Tibial artery (tissue), 4 donors: ENCODE measurements at regions of chr11 and their contacts with region 1.

Region 1: DNA sequence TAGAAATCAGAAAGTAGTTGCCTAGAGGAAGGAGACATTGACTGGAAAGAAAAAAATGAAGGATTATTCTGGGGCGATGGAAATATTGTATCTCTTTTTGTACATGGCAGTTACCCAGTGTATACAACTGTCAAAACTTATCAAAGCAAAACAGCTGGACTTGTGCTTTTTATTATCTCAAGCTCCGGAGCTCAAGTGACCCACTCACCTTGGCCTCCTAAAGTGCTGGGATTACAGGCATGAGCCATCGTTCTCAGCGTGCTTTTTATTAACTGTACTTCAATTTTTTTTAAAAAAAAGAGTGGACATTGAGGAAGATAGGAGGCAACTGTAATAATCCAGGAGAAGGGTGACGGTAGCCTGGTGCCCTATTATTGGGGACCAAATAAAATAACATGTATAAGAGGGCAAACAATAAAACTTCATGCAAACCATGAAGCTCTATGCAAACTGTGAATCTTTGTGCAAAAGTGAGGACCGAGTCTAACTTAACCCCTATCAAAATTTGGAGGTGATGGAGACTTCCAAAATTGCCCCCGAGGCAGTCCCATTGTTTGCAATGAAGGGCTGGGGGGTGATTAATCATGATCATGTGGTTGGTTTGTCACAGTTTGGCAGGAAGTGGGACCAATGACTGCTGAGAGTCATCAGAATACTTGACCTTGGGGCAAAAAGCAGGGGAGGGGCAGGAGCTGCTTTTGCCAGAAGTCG is 23.5 kb downstream of the FZD4 start:
- DNase-seq: no peak
- H3K4me3 ChIP-seq: no peak overlapping the region
- H3K27ac ChIP-seq: peak overlapping the region; percentile 3 to 28
- H3K4me1 ChIP-seq: peaks cover 0 to 53% (median 11%) of the 10 kb centered on the region in 4 donors
- H3K27me3 ChIP-seq: no peaks in the 10 kb centered on the region
- CTCF ChIP-seq: no peak

Region 2: GRCh38 chr11:86740709-86741483 is 190.8 kb before region 1 on chr11:
- intact Hi-C with region 1: no loop called
- DNase-seq: peak; percentile 70 to 86
- H3K4me3 ChIP-seq: no peak overlapping the region
- H3K27ac ChIP-seq: peak overlapping the region; percentile 86
- H3K4me1 ChIP-seq: peaks cover 0 to 74% (median 52%) of the 10 kb centered on the region in 4 donors
- H3K27me3 ChIP-seq: no peaks in the 10 kb centered on the region
- CTCF ChIP-seq: no peak

Region 3: GRCh38 chr11:87425943-87426342 is 494.2 kb after region 1 on chr11:
- intact Hi-C with region 1: loop called (anchors 5 kb)
- DNase-seq: no peak
- H3K4me3 ChIP-seq: no peak overlapping the region
- H3K27ac ChIP-seq: no peak overlapping the region
- H3K4me1 ChIP-seq: peaks cover 0 to 3% (median 0%) of the 10 kb centered on the region in 4 donors
- H3K27me3 ChIP-seq: no peaks in the 10 kb centered on the region
- CTCF ChIP-seq: no peak